ENCODE measurements at regions of chr6 and their contacts with region 1.

Region 1: DNA sequence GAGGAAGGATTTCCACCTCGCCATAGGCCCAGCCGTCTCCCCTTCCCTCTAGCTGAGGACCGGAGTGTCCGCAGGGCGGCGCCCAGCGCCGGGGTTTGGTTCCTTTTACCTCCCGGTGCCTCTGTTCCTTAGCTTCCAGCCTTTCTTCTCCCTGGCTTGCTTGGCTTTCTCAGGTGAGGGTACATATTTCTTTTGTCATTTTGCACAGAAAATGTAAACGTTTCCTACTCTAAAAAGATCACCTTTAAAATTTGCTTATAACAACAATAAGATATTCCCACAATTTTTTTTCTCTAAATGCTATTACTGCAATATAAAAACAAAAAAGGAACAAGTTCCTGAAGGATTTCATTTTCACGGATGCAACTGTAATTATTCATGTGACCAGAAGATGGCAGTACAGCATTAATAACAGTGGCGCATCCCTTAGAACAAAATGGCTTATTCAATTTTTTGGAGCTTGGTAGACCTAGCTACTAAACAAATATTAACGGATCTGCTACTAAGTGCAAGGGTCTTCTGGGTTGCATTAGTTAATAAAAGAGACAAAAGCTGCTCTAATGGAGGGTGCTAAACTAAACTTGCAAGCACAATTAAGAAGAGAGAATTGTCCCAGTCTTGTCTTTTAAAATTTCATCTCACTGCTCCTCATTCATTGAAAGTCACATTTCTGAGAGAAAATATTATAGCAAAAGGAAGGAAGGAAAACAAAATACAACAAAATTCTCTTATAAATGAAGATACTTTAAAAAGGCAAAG is 172.9 kb downstream of the ADGRG6 start:
- H3K4me3 Mint-ChIP-seq: no peak overlapping the region
- H3K27ac Mint-ChIP-seq: no peak overlapping the region
- H3K4me1 Mint-ChIP-seq: no peaks in the 10 kb centered on the region
- H3K27me3 Mint-ChIP-seq: no peaks in the 10 kb centered on the region

Region 2: GRCh38 chr6:142155895-142156757 is 318.6 kb before region 1 on chr6:
- intact Hi-C with region 1: loop called (anchors 10 kb)
- H3K4me3 Mint-ChIP-seq: no peak overlapping the region
- H3K27ac Mint-ChIP-seq: no peak overlapping the region
- H3K4me1 Mint-ChIP-seq: peaks cover 25% of the 10 kb centered on the region
- H3K27me3 Mint-ChIP-seq: no peaks in the 10 kb centered on the region

Measured in dendritic cell treated with granulocyte-macrophage colony-stimulating factor and Interleukin-4, amounts not matched to agents 40 ng/mL and 50 ng/mL, for 4 days (primary cell).